Right cardiac atrium (tissue), 5 donors: ENCODE measurements at regions of chr15 and their contacts with region 1.

Region 1: DNA sequence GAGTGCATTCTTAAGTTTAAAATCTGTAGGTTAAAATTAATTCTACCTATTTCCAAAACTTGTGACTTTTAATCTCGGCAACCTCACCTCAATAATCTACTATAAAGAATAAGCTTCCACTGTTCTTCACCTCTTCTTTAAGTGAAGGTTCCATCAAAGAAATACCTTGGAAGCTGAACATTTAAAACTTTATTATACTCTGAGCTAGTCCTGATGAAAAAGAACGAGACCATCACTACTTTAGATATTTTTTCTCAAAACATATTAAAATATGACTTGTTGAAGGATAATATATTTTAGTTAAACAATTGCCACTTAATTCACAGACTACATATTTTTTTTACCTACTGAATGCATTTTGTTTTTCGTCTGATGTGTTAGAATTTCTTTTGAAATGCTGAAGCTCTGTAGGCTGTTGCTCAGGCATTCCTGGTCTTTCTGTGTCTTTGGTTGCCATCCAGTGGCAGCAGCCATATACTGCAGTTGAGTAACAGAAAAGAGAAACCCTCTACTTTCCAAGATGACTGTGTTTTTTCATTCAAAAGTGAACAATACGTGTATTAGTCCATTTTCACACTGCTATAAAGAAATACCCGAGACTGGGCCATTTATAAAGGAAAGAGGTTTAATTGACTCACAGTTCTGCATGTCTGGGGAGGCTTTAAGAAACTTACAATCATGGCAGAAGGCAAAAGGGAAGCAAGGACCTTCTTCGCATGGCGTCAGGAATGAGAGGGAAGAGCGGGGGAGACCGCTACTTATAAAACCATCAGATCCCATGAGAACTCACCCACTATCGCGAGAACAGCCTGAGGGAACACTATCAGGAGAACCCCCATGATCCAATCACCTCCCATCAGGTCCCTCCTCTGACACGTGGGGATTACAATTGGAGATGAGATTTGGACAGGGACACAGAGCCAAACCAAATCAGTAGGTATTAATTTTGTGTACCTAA is 4.5 kb upstream of the GOLGA8B start:
- DNase-seq: peak in 2 of 3 donors; percentile 56 to 71
- ATAC-seq: peak; percentile 70 to 84
- H3K4me3 ChIP-seq: no peak overlapping the region
- H3K27ac ChIP-seq: no peak overlapping the region
- H3K4me1 ChIP-seq: no peaks in the 10 kb centered on the region
- H3K27me3 ChIP-seq: no peaks in the 10 kb centered on the region

Region 2: GRCh38 chr15:34065941-34066340 is 522.1 kb before region 1 on chr15:
- intact Hi-C with region 1: loop called in 1 of 4 experiments (anchors 5 kb)
- DNase-seq: no peak
- ATAC-seq: no peak
- H3K4me3 ChIP-seq: no peak overlapping the region
- H3K27ac ChIP-seq: no peak overlapping the region
- H3K4me1 ChIP-seq: no peaks in the 10 kb centered on the region
- H3K27me3 ChIP-seq: no peaks in the 10 kb centered on the region

Region 3: DNA sequence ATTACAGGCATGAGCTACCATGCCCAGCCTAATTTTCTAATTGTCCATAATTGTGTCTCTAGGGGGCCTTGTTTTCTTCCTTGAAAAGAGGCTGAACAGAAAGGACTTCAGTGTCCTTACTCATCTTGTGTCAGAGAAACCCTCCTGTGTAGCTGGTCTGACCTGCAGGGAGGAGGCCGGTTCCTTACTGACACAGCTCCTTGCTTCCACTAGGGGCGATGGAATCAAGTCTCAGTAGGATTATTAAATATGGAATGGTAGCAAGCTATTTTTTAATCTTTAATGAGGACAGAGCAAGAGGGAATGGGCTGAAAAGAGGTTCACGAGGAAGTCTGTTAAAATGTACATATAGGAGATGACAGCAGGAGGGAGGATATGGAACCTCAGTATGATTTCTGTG is 229.6 kb before region 1 on chr15:
- intact Hi-C with region 1: loop called in 1 of 4 experiments (anchors 10 kb)
- DNase-seq: no peak
- ATAC-seq: no peak
- H3K4me3 ChIP-seq: no peak overlapping the region
- H3K27ac ChIP-seq: no peak overlapping the region
- H3K4me1 ChIP-seq: no peaks in the 10 kb centered on the region
- H3K27me3 ChIP-seq: no peaks in the 10 kb centered on the region

Region 4: GRCh38 chr15:34514251-34514670 is 73.7 kb before region 1 on chr15:
- intact Hi-C with region 1: loop called in 1 of 4 experiments (anchors 10 kb)
- DNase-seq: peak; percentile 24 to 83 (median 80)
- ATAC-seq: peak; percentile 93
- H3K4me3 ChIP-seq: peak overlapping the region; percentile 64
- H3K27ac ChIP-seq: peak overlapping the region; percentile 68
- H3K4me1 ChIP-seq: no peaks in the 10 kb centered on the region
- H3K27me3 ChIP-seq: no peaks in the 10 kb centered on the region

Region 5: DNA sequence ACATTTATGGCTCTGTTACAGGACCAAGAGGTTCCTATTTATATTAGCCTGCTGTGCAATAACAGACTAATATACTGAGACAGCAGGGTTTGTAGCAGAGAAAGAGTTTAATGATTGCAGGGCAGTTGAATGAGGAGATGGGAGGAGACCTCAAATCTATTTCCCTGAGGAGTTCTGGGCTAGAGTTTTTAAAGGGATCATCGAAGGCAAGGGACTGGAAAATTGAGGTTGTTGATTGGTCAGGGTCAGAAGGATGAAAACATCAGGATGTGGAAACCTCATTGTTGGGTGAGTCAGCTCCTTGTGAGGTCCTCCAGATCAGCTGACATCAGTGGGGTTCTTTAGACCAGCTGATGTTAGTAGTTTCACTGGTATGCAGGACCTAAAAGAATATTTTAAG is 56.1 kb after region 1 on chr15:
- intact Hi-C with region 1: no loop called
- DNase-seq: no peak
- ATAC-seq: no peak
- H3K4me3 ChIP-seq: no peak overlapping the region
- H3K27ac ChIP-seq: no peak overlapping the region
- H3K4me1 ChIP-seq: no peaks in the 10 kb centered on the region
- H3K27me3 ChIP-seq: no peaks in the 10 kb centered on the region